ENCODE measurements at regions of chr2 and their contacts with region 1.

Region 1: DNA sequence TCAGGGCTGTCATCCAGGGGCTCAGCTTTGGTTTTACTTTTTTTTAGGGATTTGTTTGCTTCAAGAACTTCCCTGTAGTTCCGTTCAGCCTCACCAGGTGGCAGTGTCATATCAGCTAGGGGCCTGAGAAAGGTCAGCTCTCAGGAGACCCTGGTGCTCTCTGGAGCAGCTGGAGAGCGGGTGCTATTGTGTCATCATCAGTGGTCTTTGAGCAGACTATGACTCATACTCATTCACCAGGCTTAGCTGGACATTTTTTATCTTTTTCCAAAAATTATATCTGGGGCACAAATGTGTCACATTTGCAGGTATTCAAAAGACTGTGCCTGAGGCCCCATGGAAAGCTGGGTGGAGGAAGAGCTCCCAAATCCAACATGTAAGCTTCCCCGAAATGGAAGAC is 24.4 kb downstream of the ZNF892 start:
- DNase-seq: peak; percentile 74
- H3K4me3 ChIP-seq: no peak overlapping the region
- H3K27ac ChIP-seq: no peak overlapping the region
- H3K4me1 ChIP-seq: no peaks in the 10 kb centered on the region
- H3K27me3 ChIP-seq: no peaks in the 10 kb centered on the region
- CTCF ChIP-seq: peak; percentile 71

Region 2: GRCh38 chr2:95106081-95106480 is 125.6 kb before region 1 on chr2:
- intact Hi-C with region 1: no loop called
- DNase-seq: no peak
- H3K4me3 ChIP-seq: no peak overlapping the region
- H3K27ac ChIP-seq: no peak overlapping the region
- H3K4me1 ChIP-seq: no peaks in the 10 kb centered on the region
- H3K27me3 ChIP-seq: no peaks in the 10 kb centered on the region
- CTCF ChIP-seq: no peak

Region 3: GRCh38 chr2:95179451-95179850 is 52.3 kb before region 1 on chr2:
- intact Hi-C with region 1: no loop called
- DNase-seq: peak; percentile 25
- H3K4me3 ChIP-seq: no peak overlapping the region
- H3K27ac ChIP-seq: no peak overlapping the region
- H3K4me1 ChIP-seq: no peaks in the 10 kb centered on the region
- H3K27me3 ChIP-seq: no peaks in the 10 kb centered on the region
- CTCF ChIP-seq: no peak

Region 4: DNA sequence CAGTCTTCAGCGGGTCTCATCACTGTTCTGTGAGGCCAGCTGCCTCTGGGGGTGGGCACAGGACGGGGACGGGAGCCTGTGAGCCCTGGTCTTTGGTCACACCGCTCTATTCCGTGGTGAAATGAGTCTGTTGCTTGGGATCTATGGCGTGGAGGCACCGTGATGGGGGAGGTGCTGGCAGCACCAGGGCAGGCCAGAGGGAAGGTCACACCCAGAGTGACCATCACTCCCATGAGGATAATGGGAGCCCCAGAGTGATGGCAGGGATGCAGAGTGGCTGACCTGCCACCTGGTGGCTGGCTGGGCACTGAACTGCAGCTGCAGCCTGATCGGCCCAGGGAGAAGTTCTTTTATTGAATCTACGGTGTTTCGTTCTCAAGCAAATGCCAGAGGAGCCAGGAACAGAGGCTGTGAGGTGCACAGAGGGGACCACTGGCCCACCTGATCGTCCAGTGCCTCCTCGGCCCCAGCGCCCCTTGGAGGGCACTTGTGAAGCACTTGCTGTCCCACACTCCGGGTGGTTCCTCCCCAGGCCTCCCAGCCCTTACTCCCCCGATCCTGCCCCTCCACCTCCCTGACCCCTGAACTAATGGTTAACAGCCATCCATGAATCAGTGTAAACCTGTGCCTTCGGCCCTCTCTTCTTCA is 83.4 kb after region 1 on chr2:
- intact Hi-C with region 1: loop called (anchors 1 kb)
- DNase-seq: peak; percentile 49
- H3K4me3 ChIP-seq: no peak overlapping the region
- H3K27ac ChIP-seq: no peak overlapping the region
- H3K4me1 ChIP-seq: no peaks in the 10 kb centered on the region
- H3K27me3 ChIP-seq: no peaks in the 10 kb centered on the region
- CTCF ChIP-seq: peak; percentile 47

Measured in colonic mucosa (tissue), 4 donors.